HCT116 (cell line): ENCODE measurements at regions of chr2 and their contacts with region 1.

Region 1: GRCh38 chr2:32807662-32808061 is 139.1 kb upstream of the LTBP1 start:
- DNase-seq: no peak
- ATAC-seq: no peak
- H3K4me3 ChIP-seq: no peak overlapping the region
- H3K27ac ChIP-seq: no peak overlapping the region
- H3K4me1 ChIP-seq: peaks cover 3 to 8% of the 10 kb centered on the region in 2 experiments; a peak in 3 of 4 replicates
- H3K27me3 ChIP-seq: no peaks in the 10 kb centered on the region
- CTCF ChIP-seq: no peak
- POLR2A ChIP-seq: no peak
- RAD21 ChIP-seq: no peak

Region 2: DNA sequence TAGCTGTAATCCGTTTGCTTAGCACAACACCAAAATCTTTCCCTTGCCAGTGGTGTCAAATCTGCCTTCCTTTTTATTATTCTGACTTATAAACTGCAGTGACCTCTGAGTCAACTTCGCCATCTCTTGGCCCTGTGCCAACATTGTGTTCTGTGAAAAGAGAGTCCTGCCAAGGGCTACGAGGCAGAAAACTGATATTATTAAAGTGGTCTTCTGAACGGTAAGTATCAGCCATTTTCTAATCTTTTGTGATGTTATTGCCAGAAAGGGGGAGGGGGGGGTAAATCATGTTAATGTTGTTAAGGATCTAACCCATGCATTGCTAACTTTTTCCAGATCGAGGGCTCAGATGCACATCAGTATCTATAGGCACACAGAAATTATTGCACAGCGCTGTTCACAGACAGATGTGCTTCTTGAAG is 17.6 kb after region 1 on chr2:
- CTCF ChIA-PET with region 1: no interaction called
- POLR2A ChIA-PET with region 1: no interaction called
- RAD21 ChIA-PET with region 1: no interaction called
- intact Hi-C with region 1: loop called (anchors 2 kb)
- DNase-seq: no peak
- ATAC-seq: no peak
- H3K4me3 ChIP-seq: no peak overlapping the region
- H3K27ac ChIP-seq: no peak overlapping the region
- H3K4me1 ChIP-seq: no peaks in the 10 kb centered on the region
- H3K27me3 ChIP-seq: no peaks in the 10 kb centered on the region
- CTCF ChIP-seq: no peak
- POLR2A ChIP-seq: no peak
- RAD21 ChIP-seq: no peak